ENCODE measurements at regions of chr11 and their contacts with region 1.

Region 1: DNA sequence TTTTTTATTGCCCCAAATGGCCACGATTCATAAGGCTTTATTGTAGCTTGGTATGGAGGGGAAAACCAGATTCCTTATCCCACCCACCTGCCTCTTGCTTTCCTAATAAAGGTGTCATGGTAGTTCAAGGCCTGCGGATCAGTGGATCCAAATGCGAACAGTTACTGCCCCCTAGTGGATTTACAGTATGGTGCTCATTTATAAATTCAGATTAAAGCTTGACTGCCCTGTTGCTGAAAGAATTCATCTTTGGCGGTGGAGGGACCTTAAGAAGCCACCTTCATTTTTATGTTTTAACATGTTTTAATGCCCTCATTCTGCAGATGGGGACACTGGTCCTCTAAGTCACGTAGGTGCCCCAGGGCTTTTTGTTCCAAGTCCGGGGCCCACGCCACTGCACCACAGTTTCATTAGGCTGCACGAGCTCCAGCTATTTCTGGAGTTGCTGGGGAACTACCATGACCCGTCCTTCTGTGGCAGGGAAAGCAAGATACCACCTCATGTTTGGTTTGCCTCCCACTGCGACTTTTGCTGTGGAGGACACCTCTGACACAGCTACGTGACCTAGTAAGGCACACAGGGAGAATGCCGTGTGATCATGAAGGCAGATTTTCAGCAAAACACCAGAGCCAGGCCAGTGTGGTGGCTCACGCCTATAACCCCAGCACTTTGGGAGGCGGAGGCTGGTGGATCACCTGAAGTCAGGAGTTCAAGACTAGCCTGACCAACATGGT is 15.6 kb upstream of the INCENP start:
- DNase-seq: peak; percentile 51
- ATAC-seq: peak; percentile 32
- H3K4me3 Mint-ChIP-seq: no peak overlapping the region
- H3K27ac Mint-ChIP-seq: no peak overlapping the region
- H3K4me1 Mint-ChIP-seq: peaks cover 16% of the 10 kb centered on the region
- H3K27me3 Mint-ChIP-seq: peaks cover 2% of the 10 kb centered on the region

Region 2: DNA sequence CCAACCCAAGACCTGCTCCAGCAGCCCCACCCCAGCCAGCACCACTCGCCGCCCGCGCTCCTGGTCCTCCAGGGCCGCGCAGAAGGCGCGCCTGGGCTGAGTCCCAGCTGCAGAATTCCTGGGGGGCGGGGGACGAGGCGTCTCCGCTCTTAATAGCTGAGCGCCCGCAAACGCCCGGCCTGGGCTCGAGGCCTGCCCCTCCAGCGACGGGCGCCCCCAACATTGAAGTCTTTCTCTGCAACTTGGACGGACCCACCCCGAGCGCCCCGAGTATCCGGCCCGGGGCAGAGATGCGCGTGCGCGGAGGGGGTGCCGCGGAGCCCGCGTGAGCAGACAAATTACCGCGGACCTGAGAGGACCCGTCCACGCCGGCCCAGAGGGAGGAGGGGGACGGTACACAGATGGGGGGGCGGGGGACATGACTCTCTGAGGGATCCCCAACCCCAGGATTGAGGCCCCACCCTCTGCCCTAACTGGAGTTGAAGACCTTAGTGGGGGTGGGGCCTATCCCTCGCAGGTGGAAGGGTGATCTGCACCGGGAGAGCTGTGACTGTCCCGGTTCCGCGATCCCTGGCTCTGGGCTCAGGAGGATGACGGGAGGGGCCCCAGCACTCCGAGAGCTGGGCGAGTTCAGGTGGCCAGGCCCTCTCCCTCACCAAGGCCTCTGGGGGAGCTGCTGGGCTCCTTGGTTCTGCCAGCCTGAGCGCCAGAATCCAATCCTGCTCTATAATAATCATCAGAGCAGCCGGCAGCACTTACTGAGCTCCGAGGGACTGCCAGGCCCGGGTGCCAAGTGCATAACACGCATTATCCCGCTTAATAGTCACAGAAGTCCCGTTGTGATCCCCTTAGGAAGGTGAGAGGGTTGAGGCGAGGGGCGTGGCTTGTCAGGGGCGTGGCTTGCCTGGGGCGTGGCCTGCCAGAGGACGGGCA is 520.4 kb before region 1 on chr11:
- CTCF ChIA-PET with region 1: no interaction called
- POLR2A ChIA-PET with region 1: no interaction called
- intact Hi-C with region 1: no loop called
- DNase-seq: peak; percentile 79
- ATAC-seq: peak; percentile 79
- H3K4me3 Mint-ChIP-seq: peak overlapping the region; percentile 50
- H3K27ac Mint-ChIP-seq: no peak overlapping the region
- H3K4me1 Mint-ChIP-seq: peaks cover 10% of the 10 kb centered on the region
- H3K27me3 Mint-ChIP-seq: peaks cover 25% of the 10 kb centered on the region

Region 3: GRCh38 chr11:61747192-61747966 is 360.8 kb before region 1 on chr11:
- CTCF ChIA-PET with region 1: interaction called, 7 read pairs
- POLR2A ChIA-PET with region 1: no interaction called
- intact Hi-C with region 1: loop called (anchors 2 to 5 kb)
- DNase-seq: peak; percentile 75
- ATAC-seq: peak; percentile 63
- H3K4me3 Mint-ChIP-seq: no peak overlapping the region
- H3K27ac Mint-ChIP-seq: no peak overlapping the region
- H3K4me1 Mint-ChIP-seq: peaks cover 2% of the 10 kb centered on the region
- H3K27me3 Mint-ChIP-seq: peaks cover 17% of the 10 kb centered on the region

Region 4: GRCh38 chr11:61885166-61885778 is 222.9 kb before region 1 on chr11:
- CTCF ChIA-PET with region 1: interaction called, 11 read pairs
- POLR2A ChIA-PET with region 1: no interaction called
- intact Hi-C with region 1: no loop called
- DNase-seq: no peak
- ATAC-seq: no peak
- H3K4me3 Mint-ChIP-seq: no peak overlapping the region
- H3K27ac Mint-ChIP-seq: no peak overlapping the region
- H3K4me1 Mint-ChIP-seq: no peaks in the 10 kb centered on the region
- H3K27me3 Mint-ChIP-seq: no peaks in the 10 kb centered on the region

Region 5: GRCh38 chr11:61947486-61948210 is 160.5 kb before region 1 on chr11:
- CTCF ChIA-PET with region 1: interaction called, 40 read pairs
- POLR2A ChIA-PET with region 1: no interaction called
- intact Hi-C with region 1: loop called in 1 of 2 experiments (anchors 2 kb)
- DNase-seq: peak; percentile 84
- ATAC-seq: peak; percentile 72
- H3K4me3 Mint-ChIP-seq: no peak overlapping the region
- H3K27ac Mint-ChIP-seq: no peak overlapping the region
- H3K4me1 Mint-ChIP-seq: peaks cover 5% of the 10 kb centered on the region
- H3K27me3 Mint-ChIP-seq: peaks cover 2% of the 10 kb centered on the region

Region 6: GRCh38 chr11:62088331-62088933 is 19.8 kb before region 1 on chr11:
- CTCF ChIA-PET with region 1: interaction called, 24 read pairs
- POLR2A ChIA-PET with region 1: interaction called, 5 read pairs
- intact Hi-C with region 1: no loop called
- DNase-seq: no peak
- ATAC-seq: no peak
- H3K4me3 Mint-ChIP-seq: no peak overlapping the region
- H3K27ac Mint-ChIP-seq: no peak overlapping the region
- H3K4me1 Mint-ChIP-seq: no peaks in the 10 kb centered on the region
- H3K27me3 Mint-ChIP-seq: peaks cover 4% of the 10 kb centered on the region

Region 7: DNA sequence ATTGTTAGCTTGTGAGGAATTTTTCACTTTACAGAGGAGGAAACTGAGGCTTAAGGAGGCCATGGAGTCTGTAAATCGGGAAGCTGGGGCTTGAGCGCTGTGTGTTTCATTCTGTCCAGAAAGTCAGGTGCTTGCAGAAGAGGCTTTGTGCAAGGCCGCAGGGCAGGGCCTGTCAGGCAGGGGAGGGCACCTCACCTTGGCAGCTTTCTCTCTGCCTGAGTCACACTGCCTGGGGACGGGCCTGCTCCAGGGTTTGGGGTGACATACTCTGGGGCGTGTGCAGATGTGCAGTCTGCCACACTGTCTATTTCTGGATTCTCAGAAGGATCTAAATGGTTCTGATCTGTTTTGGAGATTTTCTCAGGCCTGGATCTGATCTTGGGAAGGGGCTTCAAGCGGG is 24.0 kb after region 1 on chr11:
- CTCF ChIA-PET with region 1: interaction called, 16 read pairs
- POLR2A ChIA-PET with region 1: no interaction called
- intact Hi-C with region 1: no loop called
- DNase-seq: no peak
- ATAC-seq: peak; percentile 63
- H3K4me3 Mint-ChIP-seq: no peak overlapping the region
- H3K27ac Mint-ChIP-seq: no peak overlapping the region
- H3K4me1 Mint-ChIP-seq: peaks cover 17% of the 10 kb centered on the region
- H3K27me3 Mint-ChIP-seq: no peaks in the 10 kb centered on the region

Measured in activated CD4-positive, alpha-beta T cell treated with anti-CD3 and anti-CD28 coated beads for 36 hours (primary cell).